Transverse colon (tissue), 4 donors: ENCODE measurements at regions of chr1 and their contacts with region 1.

Region 1: GRCh38 chr1:19577036-19577435 is 67.1 kb upstream of the NBL1 start:
- DNase-seq: no peak
- H3K4me3 ChIP-seq: no peak overlapping the region
- H3K27ac ChIP-seq: no peak overlapping the region
- H3K4me1 ChIP-seq: no peaks in the 10 kb centered on the region
- H3K27me3 ChIP-seq: no peaks in the 10 kb centered on the region
- CTCF ChIP-seq: no peak
- EP300 ChIP-seq: no peak
- POLR2A ChIP-seq: no peak

Region 2: DNA sequence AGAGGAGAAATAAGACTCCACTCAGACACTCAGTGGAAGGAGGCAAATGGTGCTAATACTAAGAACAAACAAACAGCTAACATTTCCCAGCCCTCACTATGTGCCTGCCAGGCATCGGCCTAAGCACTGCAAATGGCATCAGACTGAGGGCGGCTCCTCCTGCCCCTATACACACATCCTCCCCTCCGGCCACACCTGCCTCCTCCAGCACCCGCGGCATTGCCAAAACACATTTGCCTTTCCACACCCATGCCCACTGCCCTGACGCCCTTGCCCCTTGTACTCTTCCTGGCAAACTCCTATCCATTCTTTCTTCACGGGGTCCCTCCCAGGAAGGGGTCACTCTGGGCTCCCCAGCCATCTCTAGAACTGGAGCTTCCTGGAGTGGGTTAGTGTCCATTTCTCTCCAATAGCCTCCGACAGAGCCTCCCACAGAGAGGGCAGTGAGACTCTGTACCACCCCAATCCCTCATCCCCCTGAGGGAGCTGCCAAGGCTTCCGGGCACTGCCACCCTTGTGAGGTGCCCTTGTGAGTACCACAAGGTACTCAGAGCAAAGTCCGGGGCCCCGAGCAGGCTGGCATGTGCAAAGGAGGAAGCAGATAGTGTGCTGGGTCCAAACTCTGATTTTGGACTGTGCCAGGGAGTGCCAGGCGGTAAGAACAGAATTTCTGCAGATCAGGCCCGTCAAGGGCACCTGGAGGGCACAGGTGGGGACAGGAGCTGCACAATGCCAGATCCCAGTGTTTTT is 289.4 kb before region 1 on chr1:
- in situ Hi-C with region 1: no loop called
- intact Hi-C with region 1: no loop called
- DNase-seq: peak; percentile 79
- H3K4me3 ChIP-seq: peak overlapping the region in 3 of 4 donors; percentile 38 to 64 (median 40)
- H3K27ac ChIP-seq: peak overlapping the region; percentile 79 to 87 (median 83)
- H3K4me1 ChIP-seq: peaks cover 4 to 34% (median 21%) of the 10 kb centered on the region in 4 donors
- H3K27me3 ChIP-seq: no peaks in the 10 kb centered on the region
- CTCF ChIP-seq: no peak
- EP300 ChIP-seq: peak; percentile 2
- POLR2A ChIP-seq: peak; percentile 54

Region 3: GRCh38 chr1:19384113-19384512 is 192.9 kb before region 1 on chr1:
- in situ Hi-C with region 1: loop called in 1 of 4 experiments (anchors 10 kb)
- intact Hi-C with region 1: no loop called
- DNase-seq: peak; percentile 58
- H3K4me3 ChIP-seq: no peak overlapping the region
- H3K27ac ChIP-seq: peak overlapping the region; percentile 66 to 86 (median 76)
- H3K4me1 ChIP-seq: peaks cover 29 to 47% (median 36%) of the 10 kb centered on the region in 4 donors
- H3K27me3 ChIP-seq: no peaks in the 10 kb centered on the region
- CTCF ChIP-seq: no peak
- EP300 ChIP-seq: no peak
- POLR2A ChIP-seq: no peak